ENCODE measurements at regions of chr11 and their contacts with region 1.

Region 1: DNA sequence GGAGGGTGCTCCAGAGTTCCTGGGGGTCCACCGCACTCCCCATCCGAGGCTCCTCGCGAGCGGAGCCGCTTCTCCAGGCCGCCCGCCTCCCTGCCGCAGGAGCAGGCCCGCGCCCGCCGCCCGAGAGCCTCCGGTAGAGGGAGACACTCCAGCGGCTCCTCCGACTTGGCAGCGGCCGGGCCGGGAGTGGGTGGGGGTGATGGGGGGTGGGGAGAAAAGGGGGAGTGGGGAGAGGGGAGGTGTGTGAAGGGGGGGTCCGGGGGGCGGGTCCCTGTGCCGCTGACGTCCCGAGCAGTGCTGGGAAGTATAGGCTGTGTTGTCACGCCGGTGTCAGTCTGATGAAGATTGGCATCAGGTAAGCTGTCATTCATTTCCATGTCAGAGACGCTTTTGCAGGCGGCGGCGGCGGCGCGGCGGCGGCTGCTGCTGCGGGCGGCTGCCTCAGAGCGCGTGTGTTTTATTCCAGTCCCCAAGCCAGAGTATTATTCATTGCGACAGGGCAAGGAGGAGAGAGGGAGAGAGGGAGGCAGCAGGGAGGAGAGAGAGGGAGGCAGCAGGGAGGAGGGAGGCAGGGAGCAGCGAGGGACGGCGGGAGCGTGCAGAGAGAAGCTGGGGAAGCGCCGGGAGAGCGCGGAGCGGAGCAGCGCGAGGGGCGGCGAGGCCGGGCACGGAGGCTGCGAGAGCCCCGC is at the start of gene PKNOX2:
- DNase-seq: peak; percentile 61 to 83
- ATAC-seq: peak; percentile 65 to 70
- H3K4me3 ChIP-seq: peak within 1 kb of the TSS; percentile 62 to 90 (median 70)
- H3K27ac ChIP-seq: peak within 1 kb of the TSS; percentile 88 to 99 (median 91)
- H3K4me1 ChIP-seq: peaks cover 31 to 32% of the 10 kb centered on the region in 2 donors
- H3K27me3 ChIP-seq: no peaks in the 10 kb centered on the region
- CTCF ChIP-seq: peak; percentile 51 to 91 (median 54)
- POLR2A ChIP-seq: peak; percentile 93 to 96
- total RNA-seq, gene PKNOX2: 3.7 to 11.7 (median 6.0) TPM

Region 2: GRCh38 chr11:125214571-125215565 is 50.3 kb after region 1 on chr11:
- in situ Hi-C with region 1: no loop called
- intact Hi-C with region 1: loop called (anchors 5 kb)
- DNase-seq: no peak
- ATAC-seq: no peak
- H3K4me3 ChIP-seq: no peak overlapping the region
- H3K27ac ChIP-seq: peak overlapping the region; percentile 24 to 48 (median 44)
- H3K4me1 ChIP-seq: peaks cover 43 to 76% of the 10 kb centered on the region in 2 donors
- H3K27me3 ChIP-seq: no peaks in the 10 kb centered on the region
- CTCF ChIP-seq: no peak
- POLR2A ChIP-seq: no peak

Region 3: GRCh38 chr11:125233809-125234208 is 69.2 kb after region 1 on chr11:
- in situ Hi-C with region 1: no loop called
- intact Hi-C with region 1: loop called (anchors 2 kb)
- DNase-seq: no peak
- ATAC-seq: no peak
- H3K4me3 ChIP-seq: no peak overlapping the region
- H3K27ac ChIP-seq: no peak overlapping the region
- H3K4me1 ChIP-seq: peaks cover 35% of the 10 kb centered on the region in 2 donors
- H3K27me3 ChIP-seq: no peaks in the 10 kb centered on the region
- CTCF ChIP-seq: no peak
- POLR2A ChIP-seq: no peak

Region 4: GRCh38 chr11:125345421-125346178 is 181.0 kb after region 1 on chr11:
- in situ Hi-C with region 1: loop called (anchors 5 to 10 kb)
- intact Hi-C with region 1: loop called (anchors 1 kb)
- DNase-seq: peak; percentile 71 to 89
- ATAC-seq: peak; percentile 83 to 93
- H3K4me3 ChIP-seq: no peak overlapping the region
- H3K27ac ChIP-seq: peak overlapping the region; percentile 68 to 85 (median 72)
- H3K4me1 ChIP-seq: peaks cover 24 to 29% of the 10 kb centered on the region in 2 donors
- H3K27me3 ChIP-seq: no peaks in the 10 kb centered on the region
- CTCF ChIP-seq: peak; percentile 90 to 94 (median 91)
- POLR2A ChIP-seq: no peak